GM10248 (cell line): ENCODE measurements at regions of chr2 and their contacts with region 1.

Region 1: GRCh38 chr2:10408649-10409579 is 39.2 kb downstream of the ODC1 start:
- DNase-seq: peak; percentile 88
- CTCF ChIP-seq: peak; percentile 93

Region 2: DNA sequence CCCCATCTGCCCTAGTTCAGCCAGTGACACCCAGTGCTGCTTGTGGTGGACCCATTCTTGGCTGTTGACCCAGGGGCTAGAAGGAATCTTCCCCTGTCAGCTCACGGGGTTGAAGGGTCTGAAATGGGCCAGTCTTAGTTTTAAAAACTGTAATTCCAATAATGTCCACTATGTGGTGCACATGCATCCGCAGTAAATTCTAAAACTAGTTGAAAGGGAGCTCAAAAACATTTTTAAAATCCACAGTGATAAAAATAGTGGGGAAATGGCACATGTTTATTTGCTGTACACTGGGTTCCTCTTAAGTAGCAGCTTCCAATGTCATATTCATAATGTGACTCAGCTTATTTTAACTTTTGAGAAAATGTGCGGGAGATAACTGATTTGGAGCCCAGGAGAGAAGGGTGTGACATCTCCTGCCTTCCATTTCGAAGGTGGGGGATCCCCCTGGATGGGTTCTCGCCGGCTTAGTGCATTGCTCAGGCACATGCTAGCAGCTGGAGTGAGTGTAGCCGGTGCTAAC is 424.6 kb before region 1 on chr2:
- CTCF ChIA-PET with region 1: interaction called, 11 read pairs
- POLR2A ChIA-PET with region 1: no interaction called
- DNase-seq: peak; percentile 75
- CTCF ChIP-seq: peak; percentile 67

Region 3: DNA sequence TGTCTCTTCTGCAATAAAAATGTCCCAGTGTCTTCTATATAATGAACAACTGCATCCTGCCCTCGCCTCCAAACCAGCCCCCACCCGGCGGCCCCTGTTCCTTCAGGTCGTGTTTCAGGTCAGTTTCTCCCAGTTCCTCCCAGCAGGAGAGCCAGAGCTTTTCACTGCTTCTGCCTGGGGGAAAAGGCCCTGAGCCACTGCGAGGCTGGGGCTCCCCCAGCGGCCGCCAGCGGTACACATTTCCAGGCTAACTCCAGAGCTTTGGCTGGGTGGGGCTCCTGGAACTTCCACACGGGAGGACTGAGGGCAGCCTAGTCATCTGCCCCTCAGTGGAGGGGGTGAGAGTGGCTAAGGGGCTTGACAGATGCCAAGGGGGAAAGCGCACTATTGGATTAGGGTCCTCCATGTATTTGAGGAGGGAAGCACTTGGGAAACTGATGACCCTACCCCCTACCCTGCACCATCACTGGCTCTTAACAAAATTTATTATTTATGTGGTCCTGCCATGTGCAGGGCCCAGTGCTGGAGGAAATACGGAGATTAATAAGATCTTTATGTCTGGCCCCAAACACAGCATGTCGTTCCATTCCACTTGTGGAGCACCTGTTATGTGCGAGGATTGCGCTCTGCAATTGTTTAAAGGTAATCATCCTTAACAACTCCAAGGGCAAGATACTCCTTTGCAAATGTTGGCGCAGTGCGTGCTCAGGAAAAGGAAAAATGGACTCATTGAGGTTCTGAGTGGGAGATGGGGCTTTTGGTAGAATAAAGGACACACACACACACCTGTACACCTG is 311.4 kb before region 1 on chr2:
- CTCF ChIA-PET with region 1: interaction called, 11 read pairs
- POLR2A ChIA-PET with region 1: no interaction called
- DNase-seq: peak; percentile 76
- CTCF ChIP-seq: peak; percentile 92

Region 4: DNA sequence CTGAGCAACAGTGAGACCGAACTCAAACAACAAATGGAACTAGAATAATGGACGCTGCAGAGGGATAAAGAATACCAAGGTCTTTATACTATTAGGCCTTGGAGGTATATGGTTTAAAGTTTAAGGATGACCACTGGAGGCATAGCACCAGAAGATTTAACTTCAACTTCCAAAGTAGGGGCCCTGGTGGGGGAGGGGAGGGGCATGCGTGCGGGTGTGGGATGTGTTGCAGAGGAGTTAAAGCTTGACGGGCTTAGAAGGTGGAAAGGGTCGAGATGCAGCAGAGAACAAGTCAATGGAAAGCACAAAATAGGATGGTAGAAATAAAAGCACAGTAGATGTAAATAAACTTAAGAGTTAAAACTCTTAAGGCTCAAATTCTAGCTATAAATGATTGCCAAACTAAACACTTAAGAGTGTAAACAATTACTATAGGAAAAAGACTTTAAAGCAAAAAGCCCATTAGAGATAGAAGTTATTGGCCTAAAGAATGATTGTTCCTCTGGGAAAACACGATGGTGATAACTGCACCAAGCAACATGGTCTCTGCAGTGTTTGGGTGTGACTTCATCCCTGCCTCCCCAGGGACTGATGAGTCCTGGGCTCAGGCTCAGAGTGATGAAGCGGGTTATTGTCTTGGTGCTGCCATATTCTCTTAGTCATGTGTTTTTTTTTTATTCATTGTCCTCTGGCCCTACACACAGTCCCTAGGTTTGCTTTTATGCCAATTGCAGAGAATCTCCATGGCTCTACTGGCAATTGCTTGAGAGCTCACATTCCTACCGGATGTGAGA is 273.4 kb before region 1 on chr2:
- CTCF ChIA-PET with region 1: interaction called, 17 read pairs
- POLR2A ChIA-PET with region 1: no interaction called
- DNase-seq: no peak
- CTCF ChIP-seq: no peak

Region 5: GRCh38 chr2:10302479-10303180 is 106.3 kb before region 1 on chr2 and contains the start of gene HPCAL1:
- CTCF ChIA-PET with region 1: interaction called, 56 read pairs
- POLR2A ChIA-PET with region 1: no interaction called
- DNase-seq: peak; percentile 95
- CTCF ChIP-seq: peak; percentile 28

Region 6: DNA sequence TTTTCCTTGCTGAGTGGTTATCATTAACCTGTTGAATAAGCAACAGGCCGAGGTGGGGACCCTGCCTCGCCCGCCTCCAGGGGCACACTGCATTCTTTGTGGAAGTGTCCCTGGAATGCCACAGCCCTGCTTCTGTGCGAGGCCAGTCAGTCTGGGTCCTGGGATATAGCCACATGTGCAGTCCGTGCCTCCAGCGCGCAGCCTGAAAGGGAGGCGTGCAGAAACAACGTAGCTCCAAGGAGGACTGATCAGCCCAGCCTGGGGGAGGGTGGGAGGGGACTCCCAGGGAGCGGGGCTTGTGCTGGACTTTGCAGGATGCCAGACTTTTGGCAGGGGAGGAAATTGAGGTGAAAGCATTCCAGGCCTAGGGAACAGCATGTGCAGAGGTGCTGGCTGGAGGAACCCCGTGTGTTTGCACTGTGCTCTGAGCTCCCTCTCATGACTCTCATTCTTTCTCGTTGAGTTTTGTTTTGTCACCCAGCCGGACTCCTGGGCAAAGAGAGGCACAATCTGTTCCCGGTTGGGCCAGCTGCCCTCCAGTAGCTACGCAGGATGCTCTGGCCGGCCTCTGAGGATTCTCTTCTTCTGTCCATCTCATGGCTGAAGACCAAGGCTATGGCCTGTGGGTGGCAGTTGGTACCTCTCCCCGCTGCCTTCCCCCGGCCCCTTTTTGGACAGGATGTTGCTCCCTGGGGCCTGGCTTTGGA is 66.5 kb before region 1 on chr2:
- CTCF ChIA-PET with region 1: no interaction called
- POLR2A ChIA-PET with region 1: no interaction called
- DNase-seq: no peak
- CTCF ChIP-seq: no peak

Region 7: GRCh38 chr2:10382354-10383061 is 26.4 kb before region 1 on chr2:
- CTCF ChIA-PET with region 1: interaction called, 21 read pairs
- POLR2A ChIA-PET with region 1: interaction called, 5 read pairs
- DNase-seq: no peak
- CTCF ChIP-seq: no peak

Region 8: DNA sequence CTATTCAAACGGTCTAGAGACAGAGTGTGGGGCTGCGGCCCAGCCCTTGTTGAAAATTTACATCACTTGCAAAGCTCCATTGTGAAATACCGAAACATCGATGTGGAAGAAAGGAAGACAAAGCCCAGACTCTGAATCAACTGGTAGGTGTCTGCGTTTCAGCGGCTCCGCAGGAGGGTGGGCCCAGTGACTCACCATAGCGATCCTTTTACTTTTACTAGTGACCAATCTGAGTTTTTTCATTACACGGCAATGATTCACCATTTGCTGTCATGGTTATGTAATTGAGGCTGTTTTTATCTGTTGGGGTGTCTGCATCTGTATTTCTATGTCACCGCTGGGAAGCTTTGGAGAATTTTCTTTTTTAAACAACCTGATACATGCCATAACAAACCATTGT is 105.8 kb after region 1 on chr2:
- CTCF ChIA-PET with region 1: no interaction called
- POLR2A ChIA-PET with region 1: no interaction called
- DNase-seq: no peak
- CTCF ChIP-seq: no peak